ENCODE measurements at regions of chr14 and their contacts with region 1.

Region 1: DNA sequence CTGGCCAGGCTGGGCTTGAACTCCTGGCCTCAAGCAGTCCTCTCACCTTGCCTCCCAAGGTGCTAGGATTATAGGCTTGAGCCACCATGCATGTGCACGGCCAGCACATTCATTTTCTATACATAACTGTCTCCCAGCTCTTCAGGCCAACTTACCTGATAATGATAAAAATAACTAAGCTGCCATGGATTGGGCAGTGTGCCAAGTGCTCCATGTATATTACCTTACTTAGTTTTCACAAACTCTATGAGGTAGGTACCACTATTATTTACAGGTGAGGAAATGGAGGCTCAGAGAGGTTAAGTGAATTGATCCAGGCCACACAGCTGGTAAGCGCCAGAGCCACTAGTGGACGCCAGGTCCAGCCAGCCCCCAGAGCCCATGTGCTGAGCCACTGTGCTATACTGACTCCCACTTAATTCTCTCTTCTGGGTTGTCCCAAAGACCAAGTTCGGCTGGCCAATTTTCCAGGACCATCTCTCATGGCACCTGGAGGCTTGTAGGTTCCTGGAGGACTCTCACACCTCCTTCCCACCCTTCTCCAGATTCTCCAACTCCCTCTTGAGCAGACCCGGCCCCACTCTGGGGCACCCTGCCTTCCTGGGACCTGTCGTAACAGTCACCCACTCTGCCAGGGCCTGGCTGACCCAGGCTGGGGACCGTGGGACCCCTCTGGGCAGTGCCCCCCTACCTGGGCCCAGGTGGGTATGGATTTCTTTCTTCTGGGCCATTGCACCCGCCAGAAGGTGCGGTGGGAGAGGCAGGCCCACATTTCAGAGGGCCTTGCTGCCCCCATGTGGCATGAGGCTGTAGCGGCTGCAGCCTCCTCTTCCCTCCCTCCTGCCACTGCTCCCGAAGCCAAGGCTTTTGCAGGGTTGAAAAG is 30.2 kb upstream of the CIPC start:
- DNase-seq: peak; percentile 79 to 87
- ATAC-seq: peak; percentile 87 to 92
- H3K4me3 ChIP-seq: no peak overlapping the region
- H3K27ac ChIP-seq: peak overlapping the region; percentile 73 to 87
- H3K4me1 ChIP-seq: peaks cover 35% of the 10 kb centered on the region
- CTCF ChIP-seq: peak; percentile 96
- EP300 ChIP-seq: 0 out of 5 replicates have a peak, but pooled peaks of 1 of the 2 experiments have one; percentile 26
- POLR2A ChIP-seq: no peak
- RAD21 ChIP-seq: peak; percentile 100

Region 2: DNA sequence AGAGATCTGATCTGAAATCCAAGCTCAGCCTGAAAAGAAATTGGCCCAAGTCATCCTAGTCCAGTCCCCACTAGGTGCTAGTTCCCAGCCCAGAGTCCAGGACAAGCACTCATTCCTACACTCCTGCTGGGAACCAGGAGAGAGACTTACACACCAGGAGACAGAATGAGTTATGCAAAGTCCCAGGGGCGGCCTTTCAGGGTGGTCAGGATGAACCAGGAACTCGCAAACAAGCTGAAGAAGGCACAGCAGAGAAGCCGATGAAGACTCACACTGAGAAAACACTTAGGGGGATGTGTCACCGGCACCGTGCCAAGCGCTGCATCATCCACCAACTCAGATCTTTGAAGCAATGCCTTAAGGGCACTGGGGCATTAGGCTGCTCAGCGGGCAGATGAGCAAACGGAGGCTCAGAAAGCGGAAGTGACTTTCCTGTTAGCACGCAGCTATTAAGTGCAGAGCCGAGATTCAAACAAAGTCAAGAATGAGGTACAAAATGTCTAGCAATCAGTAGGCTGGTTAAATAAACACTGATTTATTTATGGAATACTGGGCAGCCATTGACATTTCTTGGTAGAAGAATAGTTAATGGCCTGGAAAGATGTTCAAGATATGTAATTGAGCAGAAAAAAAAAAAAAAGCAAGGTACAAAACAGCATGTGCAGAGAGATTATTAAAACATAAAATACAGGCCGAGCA is 163.0 kb before region 1 on chr14:
- CTCF ChIA-PET with region 1: interaction called, 676 read pairs
- POLR2A ChIA-PET with region 1: no interaction called
- DNase-seq: peak; percentile 96 to 99
- ATAC-seq: peak; percentile 85 to 89
- H3K4me3 ChIP-seq: peak overlapping the region; percentile 30
- H3K27ac ChIP-seq: peak overlapping the region; percentile 96 to 97
- H3K4me1 ChIP-seq: peaks cover 48% of the 10 kb centered on the region
- CTCF ChIP-seq: no peak
- EP300 ChIP-seq: peak; percentile 91 to 97
- POLR2A ChIP-seq: no peak
- RAD21 ChIP-seq: peak; percentile 1 to 48; a peak in 3 of 5 replicates

Region 3: GRCh38 chr14:76947078-76947837 is 120.6 kb before region 1 on chr14:
- CTCF ChIA-PET with region 1: interaction called, 132 read pairs
- POLR2A ChIA-PET with region 1: interaction called, 3 read pairs
- DNase-seq: peak; percentile 90 to 95
- ATAC-seq: peak; percentile 88 to 89
- H3K4me3 ChIP-seq: no peak overlapping the region
- H3K27ac ChIP-seq: peak overlapping the region; percentile 96 to 100
- H3K4me1 ChIP-seq: peaks cover 71% of the 10 kb centered on the region
- CTCF ChIP-seq: peak; percentile 56; the same call in 2 of the 3 replicates
- EP300 ChIP-seq: peak in 1 of 2 experiments; percentile 59; a peak in 1 of 5 replicates
- POLR2A ChIP-seq: no peak
- RAD21 ChIP-seq: peak; percentile 61 to 82

Region 4: GRCh38 chr14:76977793-76978720 is 89.8 kb before region 1 on chr14:
- CTCF ChIA-PET with region 1: interaction called, 14 read pairs
- POLR2A ChIA-PET with region 1: no interaction called
- DNase-seq: no peak
- ATAC-seq: peak; percentile 40 to 44; a peak in 5 of 6 replicates
- H3K4me3 ChIP-seq: no peak overlapping the region
- H3K27ac ChIP-seq: peak overlapping the region in 1 of 2 experiments; percentile 14; a peak in 1 of 6 replicates
- H3K4me1 ChIP-seq: no peaks in the 10 kb centered on the region
- CTCF ChIP-seq: no peak
- EP300 ChIP-seq: no peak
- POLR2A ChIP-seq: no peak
- RAD21 ChIP-seq: no peak

Region 5: GRCh38 chr14:76997256-76997970 is 70.5 kb before region 1 on chr14:
- CTCF ChIA-PET with region 1: interaction called, 10 read pairs
- POLR2A ChIA-PET with region 1: no interaction called
- DNase-seq: no peak
- ATAC-seq: no peak
- H3K4me3 ChIP-seq: no peak overlapping the region
- H3K27ac ChIP-seq: 0 out of 6 replicates have a peak overlapping the region, but pooled peaks of 1 of the 2 experiments have one; percentile 4
- H3K4me1 ChIP-seq: peaks cover 11% of the 10 kb centered on the region; the same call in 1 of the 3 replicates
- CTCF ChIP-seq: no peak
- EP300 ChIP-seq: no peak
- POLR2A ChIP-seq: no peak
- RAD21 ChIP-seq: no peak

Region 6: GRCh38 chr14:77040059-77040740 is 27.7 kb before region 1 on chr14:
- CTCF ChIA-PET with region 1: interaction called, 481 read pairs
- POLR2A ChIA-PET with region 1: interaction called, 3 read pairs
- DNase-seq: peak; percentile 88 to 99
- ATAC-seq: peak; percentile 86 to 88
- H3K4me3 ChIP-seq: peak overlapping the region; percentile 36
- H3K27ac ChIP-seq: peak overlapping the region; percentile 90 to 99
- H3K4me1 ChIP-seq: peaks cover 86% of the 10 kb centered on the region
- CTCF ChIP-seq: no peak
- EP300 ChIP-seq: peak; percentile 18 to 68; a peak in 2 of 5 replicates
- POLR2A ChIP-seq: no peak
- RAD21 ChIP-seq: peak; percentile 8 to 31; a peak in 2 of 5 replicates

Region 7: DNA sequence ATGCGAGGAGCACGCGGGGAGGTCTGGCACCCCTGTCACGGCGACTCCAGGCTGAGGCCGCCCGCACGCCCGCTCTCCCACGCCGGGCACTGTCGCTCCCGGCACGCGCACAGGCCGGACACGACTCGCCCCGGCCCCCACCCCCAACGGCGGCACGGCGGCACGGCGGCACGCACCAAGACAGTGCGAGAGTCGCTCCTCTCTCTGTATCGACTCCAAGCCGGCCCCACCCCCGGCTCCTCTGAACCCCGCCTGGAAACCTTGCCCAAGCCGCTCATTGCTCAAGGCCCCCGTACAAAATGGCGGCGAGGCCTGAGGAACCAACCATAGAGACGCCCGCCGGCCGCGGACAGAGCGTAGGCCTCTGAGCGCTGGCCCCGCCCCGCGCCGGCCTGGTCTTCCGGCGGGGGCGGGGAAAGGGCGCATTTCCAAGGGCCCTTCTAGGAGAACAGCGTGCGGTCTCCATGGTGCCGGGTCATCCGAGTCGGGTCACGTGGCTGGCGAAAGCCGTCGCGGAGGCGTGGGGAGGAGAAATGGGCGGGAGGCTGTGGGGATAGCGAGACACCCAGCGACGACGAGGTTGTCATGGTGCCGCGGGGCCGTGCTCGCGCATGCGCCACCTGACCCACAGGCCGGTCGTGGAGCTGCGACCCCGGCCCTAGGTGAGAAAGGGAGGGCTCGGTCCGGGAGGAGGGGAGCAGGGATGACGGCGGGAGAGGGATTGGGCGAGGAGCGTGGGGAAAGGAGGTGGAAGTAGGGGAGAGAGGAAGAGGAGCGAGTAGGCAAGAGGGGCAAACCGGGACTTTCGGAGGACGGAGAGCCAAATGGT is 30.0 kb after region 1 on chr14 and contains the start of gene CIPC:
- CTCF ChIA-PET with region 1: interaction called, 450 read pairs
- POLR2A ChIA-PET with region 1: no interaction called
- DNase-seq: peak; percentile 97 to 99
- ATAC-seq: peak; percentile 91 to 96
- H3K4me3 ChIP-seq: peak within 1 kb of the TSS; percentile 92
- H3K27ac ChIP-seq: peak within 1 kb of the TSS; percentile 94 to 96
- H3K4me1 ChIP-seq: peaks cover 19% of the 10 kb centered on the region
- CTCF ChIP-seq: no peak
- EP300 ChIP-seq: peak in 1 of 2 experiments; percentile 35; a peak in 1 of 5 replicates
- POLR2A ChIP-seq: peak; percentile 87
- RAD21 ChIP-seq: no peak
- polyA plus RNA-seq, gene CIPC: 13.9 and 15.2 TPM in 2 replicates

Region 8: GRCh38 chr14:77161011-77161410 is 93.1 kb after region 1 on chr14:
- CTCF ChIA-PET with region 1: no interaction called
- POLR2A ChIA-PET with region 1: no interaction called
- DNase-seq: no peak
- ATAC-seq: no peak
- H3K4me3 ChIP-seq: no peak overlapping the region
- H3K27ac ChIP-seq: no peak overlapping the region
- H3K4me1 ChIP-seq: peaks cover 12% of the 10 kb centered on the region
- CTCF ChIP-seq: no peak
- EP300 ChIP-seq: no peak
- POLR2A ChIP-seq: no peak
- RAD21 ChIP-seq: no peak

Region 9: GRCh38 chr14:77301103-77301502 is 233.2 kb after region 1 on chr14:
- CTCF ChIA-PET with region 1: no interaction called
- POLR2A ChIA-PET with region 1: no interaction called
- DNase-seq: peak; percentile 78 to 89
- ATAC-seq: peak; percentile 60 to 79
- H3K4me3 ChIP-seq: no peak overlapping the region
- H3K27ac ChIP-seq: peak overlapping the region; percentile 95 to 96
- H3K4me1 ChIP-seq: peaks cover 51% of the 10 kb centered on the region
- CTCF ChIP-seq: peak; percentile 95
- EP300 ChIP-seq: no peak
- POLR2A ChIP-seq: no peak
- RAD21 ChIP-seq: peak; percentile 96 to 97